ENCODE measurements at regions of chr6 and their contacts with region 1.

Region 1: GRCh38 chr6:158999666-159000403 is at the start of gene RSPH3:
- DNase-seq: peak; percentile 87
- H3K4me3 Mint-ChIP-seq: peak within 1 kb of the TSS; percentile 96
- H3K27ac Mint-ChIP-seq: peak within 1 kb of the TSS; percentile 89
- H3K4me1 Mint-ChIP-seq: peaks cover 49% of the 10 kb centered on the region
- H3K27me3 Mint-ChIP-seq: no peaks in the 10 kb centered on the region
- total RNA-seq, gene RSPH3: 4.9 and 5.1 TPM in 2 replicates

Region 2: DNA sequence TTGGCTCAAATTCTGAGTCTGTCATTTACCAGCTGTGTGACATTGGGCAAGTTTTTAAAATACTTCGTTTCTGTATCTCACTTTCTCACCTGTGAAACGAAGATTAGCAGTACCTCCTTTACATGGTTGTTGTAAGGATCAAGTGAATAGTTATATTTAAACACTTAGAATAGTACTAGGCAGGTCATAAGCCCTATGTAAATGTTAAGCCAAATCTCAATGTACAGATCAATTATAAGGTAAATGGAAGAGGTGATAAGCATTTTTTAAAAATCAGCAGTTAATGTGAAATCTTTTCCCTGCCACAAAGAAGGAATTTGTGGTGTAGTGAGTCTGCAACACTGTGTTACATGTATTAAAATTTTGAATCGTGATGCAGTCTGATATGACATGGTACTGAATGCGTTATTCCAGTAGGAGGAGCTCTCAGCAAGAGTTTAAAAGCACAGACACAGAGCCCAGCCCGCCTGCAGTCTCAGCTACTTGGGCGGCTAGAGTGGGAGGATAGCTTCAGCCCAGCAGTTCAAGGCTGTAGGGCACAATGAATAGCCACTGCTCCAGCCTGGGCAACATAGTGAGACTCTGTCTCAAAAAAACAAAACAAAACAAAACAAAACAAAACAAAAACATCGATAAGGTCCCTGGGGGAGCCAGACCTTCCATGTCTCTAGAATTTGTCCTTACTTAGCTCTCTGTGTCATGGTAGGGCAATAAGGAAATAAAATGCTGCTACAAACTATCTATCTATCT is 785.7 kb before region 1 on chr6:
- intact Hi-C with region 1: no loop called
- DNase-seq: peak; percentile 44
- H3K4me3 Mint-ChIP-seq: no peak overlapping the region
- H3K27ac Mint-ChIP-seq: no peak overlapping the region
- H3K4me1 Mint-ChIP-seq: peaks cover 20% of the 10 kb centered on the region
- H3K27me3 Mint-ChIP-seq: no peaks in the 10 kb centered on the region

Region 3: GRCh38 chr6:158536084-158536890 is 463.5 kb before region 1 on chr6:
- intact Hi-C with region 1: no loop called
- DNase-seq: peak; percentile 64
- H3K4me3 Mint-ChIP-seq: peak overlapping the region; percentile 64
- H3K27ac Mint-ChIP-seq: no peak overlapping the region
- H3K4me1 Mint-ChIP-seq: peaks cover 2% of the 10 kb centered on the region
- H3K27me3 Mint-ChIP-seq: peaks cover 47% of the 10 kb centered on the region

Region 4: DNA sequence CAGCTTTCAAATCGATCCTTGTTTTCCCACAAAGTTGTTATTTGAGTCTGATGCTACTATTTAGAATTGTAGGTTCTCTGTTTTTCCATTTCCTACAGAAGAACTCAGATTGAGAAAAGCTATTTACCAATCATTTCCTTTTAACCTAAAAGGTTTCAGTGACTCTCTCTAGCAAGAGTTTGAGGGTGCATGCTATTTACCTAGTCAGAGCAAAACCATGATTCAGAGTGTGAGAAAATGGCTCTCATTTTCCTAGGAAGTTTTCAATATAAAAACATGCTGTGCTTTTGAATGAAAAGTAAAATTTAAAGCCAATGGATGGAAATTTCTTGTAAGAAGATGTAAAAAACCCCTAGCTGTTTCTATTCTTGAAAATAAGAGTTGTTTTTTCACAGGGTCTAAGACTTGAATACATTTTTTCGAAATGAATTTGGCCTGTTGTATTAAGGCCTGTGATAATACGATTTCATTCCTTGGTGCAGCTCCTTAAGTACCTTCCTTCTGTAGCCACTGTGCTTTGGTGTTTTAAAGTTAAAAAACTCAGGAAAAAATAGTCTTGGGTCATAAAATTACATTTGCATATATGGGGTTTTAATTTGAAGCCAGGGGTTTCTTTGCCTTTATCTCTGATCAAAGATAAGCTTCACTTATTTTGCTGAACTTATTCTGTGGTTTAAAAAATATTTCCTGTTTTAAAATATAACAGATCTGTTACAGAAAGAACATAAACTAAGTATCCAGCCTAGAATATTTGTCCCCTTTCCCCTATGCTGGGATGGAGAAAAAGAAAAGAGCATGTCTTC is 18.1 kb after region 1 on chr6:
- intact Hi-C with region 1: loop called (anchors 1 kb)
- DNase-seq: no peak
- H3K4me3 Mint-ChIP-seq: peak overlapping the region; percentile 1
- H3K27ac Mint-ChIP-seq: peak overlapping the region; percentile 84
- H3K4me1 Mint-ChIP-seq: peaks cover 45% of the 10 kb centered on the region
- H3K27me3 Mint-ChIP-seq: no peaks in the 10 kb centered on the region

Measured in activated T-helper 2 cell treated with anti-CD3 and anti-CD28 coated beads, Interferon-gamma antibody, Interleukin-2, Interleukin-4, amounts not matched to agents 10 μg/mL and 5 μg/mL and 100 μg/mL, durations not matched to agents 14 hours and 24 hours and 36 hours (primary cell).